A673 (cell line): ENCODE measurements at regions of chr14 and their contacts with region 1.

Region 1: DNA sequence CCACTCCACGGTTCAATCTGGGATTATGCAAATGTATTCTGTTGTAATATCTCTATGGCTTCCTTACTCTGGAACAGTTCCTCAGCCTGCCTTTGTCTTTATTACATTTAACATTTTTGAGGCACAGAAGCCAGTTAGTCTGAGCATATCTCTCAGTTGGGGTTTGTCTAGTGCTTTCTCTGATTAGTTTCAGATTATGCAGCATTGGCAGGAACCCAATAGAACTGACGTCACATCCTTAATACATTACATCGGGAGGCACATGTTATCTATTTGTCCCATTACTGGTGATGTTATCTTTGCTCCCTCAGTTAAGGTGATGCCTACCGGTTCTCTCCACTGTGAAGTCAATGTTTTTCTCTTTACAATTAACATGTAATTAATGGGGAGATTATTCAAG is 62.4 kb downstream of the PPM1A start:
- DNase-seq: peak; percentile 97
- H3K4me3 ChIP-seq: no peak overlapping the region
- H3K27ac ChIP-seq: peak overlapping the region; percentile 72
- H3K4me1 ChIP-seq: peaks cover 38% of the 10 kb centered on the region
- H3K27me3 ChIP-seq: no peaks in the 10 kb centered on the region
- CTCF ChIP-seq: no peak

Region 2: DNA sequence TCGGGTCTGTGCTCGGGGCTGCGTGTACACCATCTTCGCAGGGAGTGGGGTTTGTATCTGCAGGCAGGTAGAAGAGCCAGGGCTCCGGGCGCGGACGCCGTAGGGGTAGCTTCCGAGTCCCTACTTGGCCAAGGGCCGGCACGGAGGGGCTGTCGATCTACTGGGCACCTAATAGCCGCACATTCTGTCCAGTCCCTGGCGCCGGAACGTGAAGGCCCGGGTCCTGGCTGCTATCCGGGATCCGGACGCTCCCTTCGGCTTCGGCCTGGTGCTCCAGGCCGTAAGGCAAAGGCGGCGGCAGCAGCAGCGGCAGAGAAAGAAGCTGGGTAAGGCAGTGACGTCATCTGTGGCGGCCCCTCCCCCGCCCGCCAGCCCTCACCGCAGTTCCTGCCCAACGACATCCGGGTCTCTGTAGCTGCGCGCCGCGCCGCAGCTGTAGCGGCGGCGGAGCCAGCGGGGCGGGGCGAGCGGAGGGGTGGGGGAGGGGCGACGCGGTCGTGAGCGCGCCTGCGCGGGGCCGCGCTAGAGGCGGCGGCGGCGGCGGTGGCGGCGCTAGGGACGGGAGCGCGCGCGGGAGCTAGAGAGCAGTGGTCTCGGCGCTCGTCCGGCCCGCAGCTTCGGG is 62.6 kb before region 1 on chr14 and contains the start of gene PPM1A:
- CTCF ChIA-PET with region 1: interaction called, 5 read pairs
- POLR2A ChIA-PET with region 1: interaction called, 3 read pairs
- intact Hi-C with region 1: loop called (anchors 5 kb)
- DNase-seq: peak; percentile 96
- H3K4me3 ChIP-seq: peak within 1 kb of the TSS; percentile 81
- H3K27ac ChIP-seq: peak within 1 kb of the TSS; percentile 98
- H3K4me1 ChIP-seq: peaks cover 19% of the 10 kb centered on the region
- H3K27me3 ChIP-seq: no peaks in the 10 kb centered on the region
- CTCF ChIP-seq: no peak
- total RNA-seq, gene PPM1A: 52.3 and 54.5 TPM in 2 replicates

Region 3: DNA sequence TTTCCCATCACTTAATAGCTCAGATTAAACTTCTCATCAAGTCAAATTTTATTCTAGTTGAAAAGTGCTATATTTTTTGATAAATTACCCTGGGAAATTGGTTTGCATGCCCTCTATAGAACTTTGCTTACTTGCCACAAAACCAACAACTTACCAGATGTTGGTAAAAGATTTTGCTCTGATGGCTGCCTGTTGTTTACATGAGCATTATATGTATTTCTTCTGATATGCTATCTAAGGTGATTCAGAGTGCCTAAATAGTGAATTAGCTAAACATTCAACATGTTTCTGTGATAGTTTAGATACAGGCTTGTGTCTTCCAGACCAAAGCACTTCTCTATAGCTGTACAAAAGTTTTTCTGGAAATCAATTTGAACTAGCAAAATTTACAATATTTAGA is 11.4 kb before region 1 on chr14:
- CTCF ChIA-PET with region 1: no interaction called
- POLR2A ChIA-PET with region 1: no interaction called
- intact Hi-C with region 1: no loop called
- DNase-seq: no peak
- H3K4me3 ChIP-seq: no peak overlapping the region
- H3K27ac ChIP-seq: no peak overlapping the region
- H3K4me1 ChIP-seq: peaks cover 13% of the 10 kb centered on the region
- H3K27me3 ChIP-seq: no peaks in the 10 kb centered on the region
- CTCF ChIP-seq: no peak